PC-9 (cell line): ENCODE measurements at regions of chr12 and their contacts with region 1.

Region 1: DNA sequence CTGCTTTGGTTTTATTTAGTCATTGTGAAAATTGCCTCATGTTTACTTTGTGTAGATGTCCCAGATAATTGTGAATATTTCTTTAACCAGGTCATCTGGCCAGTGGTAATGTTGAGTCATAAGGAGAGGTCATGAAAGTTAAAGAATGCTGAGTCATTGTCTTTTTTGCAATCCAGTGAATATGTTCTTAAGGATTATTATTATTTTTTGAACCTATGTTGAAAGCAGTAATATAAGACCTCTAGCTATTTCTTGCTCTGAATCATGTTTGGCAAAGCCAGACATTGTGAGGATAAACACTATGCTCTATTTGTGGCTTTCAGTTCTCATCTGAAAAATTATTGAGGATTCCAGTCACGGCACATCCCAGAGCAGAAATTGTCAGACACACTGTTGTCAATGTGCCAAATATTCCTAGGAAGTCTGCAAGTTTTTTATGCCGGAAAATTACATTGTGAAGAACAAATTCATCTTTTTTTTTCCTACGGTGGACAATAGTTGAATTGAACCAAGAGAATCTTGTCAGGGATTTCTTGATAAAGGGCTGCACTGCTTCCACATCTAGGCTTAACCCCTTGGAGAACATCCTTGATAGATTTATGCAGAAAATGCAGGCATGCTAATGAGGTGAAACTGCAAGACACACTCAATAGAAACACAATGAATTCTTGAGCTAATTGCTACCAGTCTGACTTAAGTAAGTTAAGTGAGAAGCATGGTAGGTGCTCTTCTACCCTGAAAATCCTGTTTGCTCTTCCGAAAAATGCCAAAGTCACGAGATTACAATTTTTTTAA is 369.7 kb downstream of the ATP23 start:
- DNase-seq: peak; percentile 17 to 94
- H3K4me3 ChIP-seq: peak overlapping the region; percentile 6; the same call in 1 of the 2 replicates
- H3K27ac ChIP-seq: peak overlapping the region; percentile 85
- H3K4me1 ChIP-seq: peaks cover 33% of the 10 kb centered on the region
- H3K27me3 ChIP-seq: no peaks in the 10 kb centered on the region
- CTCF ChIP-seq: no peak

Region 2: GRCh38 chr12:57993025-57993424 is 318.0 kb before region 1 on chr12:
- CTCF ChIA-PET with region 1: no interaction called
- POLR2A ChIA-PET with region 1: no interaction called
- intact Hi-C with region 1: loop called (anchors 5 kb)
- DNase-seq: no peak
- H3K4me3 ChIP-seq: no peak overlapping the region
- H3K27ac ChIP-seq: no peak overlapping the region
- H3K4me1 ChIP-seq: no peaks in the 10 kb centered on the region
- H3K27me3 ChIP-seq: no peaks in the 10 kb centered on the region
- CTCF ChIP-seq: peak; percentile 59

Region 3: DNA sequence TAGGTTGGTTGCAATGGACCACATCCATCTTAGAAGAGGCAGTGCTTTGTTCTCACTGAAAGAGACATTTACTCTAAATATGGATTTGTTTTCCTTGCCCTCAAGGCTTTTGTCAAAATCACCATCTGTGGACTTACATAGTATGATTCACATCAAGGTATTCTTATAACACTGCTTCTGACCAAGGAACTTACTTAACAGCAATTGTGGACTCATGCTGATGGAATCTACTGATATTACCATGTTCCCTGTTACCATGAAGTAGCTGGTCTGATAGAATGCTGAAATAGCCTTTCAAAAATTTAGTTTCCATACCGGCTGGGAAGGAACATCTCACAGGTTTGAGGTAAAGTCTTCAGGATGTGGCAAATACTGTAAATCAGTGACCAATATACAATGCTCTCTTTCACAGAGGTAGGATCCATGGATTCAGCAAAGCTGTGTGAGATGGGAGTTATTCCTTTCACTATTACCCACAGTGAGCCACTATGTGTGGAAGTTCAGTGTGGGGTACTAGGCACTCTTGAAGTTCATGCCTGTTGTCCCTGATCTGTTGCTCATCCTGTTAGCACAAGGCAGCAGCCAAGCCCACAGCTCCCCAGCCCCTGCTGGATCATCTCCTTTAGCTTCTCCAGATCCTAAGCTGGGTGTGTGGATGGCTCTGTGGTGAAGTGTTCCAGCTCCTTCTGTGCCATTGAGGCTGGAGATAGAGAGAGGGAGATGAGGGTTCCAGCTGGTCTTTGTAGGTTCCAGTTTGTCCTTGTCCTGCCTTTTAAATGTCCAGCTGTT is 243.2 kb before region 1 on chr12:
- CTCF ChIA-PET with region 1: no interaction called
- POLR2A ChIA-PET with region 1: no interaction called
- intact Hi-C with region 1: loop called (anchors 5 kb)
- DNase-seq: peak; percentile 22 to 99
- H3K4me3 ChIP-seq: no peak overlapping the region
- H3K27ac ChIP-seq: peak overlapping the region; percentile 57
- H3K4me1 ChIP-seq: peaks cover 39% of the 10 kb centered on the region
- H3K27me3 ChIP-seq: no peaks in the 10 kb centered on the region
- CTCF ChIP-seq: no peak

Region 4: GRCh38 chr12:58288190-58288589 is 22.8 kb before region 1 on chr12:
- CTCF ChIA-PET with region 1: no interaction called
- POLR2A ChIA-PET with region 1: no interaction called
- intact Hi-C with region 1: no loop called
- DNase-seq: no peak
- H3K4me3 ChIP-seq: no peak overlapping the region
- H3K27ac ChIP-seq: no peak overlapping the region
- H3K4me1 ChIP-seq: no peaks in the 10 kb centered on the region
- H3K27me3 ChIP-seq: no peaks in the 10 kb centered on the region
- CTCF ChIP-seq: no peak

Region 5: DNA sequence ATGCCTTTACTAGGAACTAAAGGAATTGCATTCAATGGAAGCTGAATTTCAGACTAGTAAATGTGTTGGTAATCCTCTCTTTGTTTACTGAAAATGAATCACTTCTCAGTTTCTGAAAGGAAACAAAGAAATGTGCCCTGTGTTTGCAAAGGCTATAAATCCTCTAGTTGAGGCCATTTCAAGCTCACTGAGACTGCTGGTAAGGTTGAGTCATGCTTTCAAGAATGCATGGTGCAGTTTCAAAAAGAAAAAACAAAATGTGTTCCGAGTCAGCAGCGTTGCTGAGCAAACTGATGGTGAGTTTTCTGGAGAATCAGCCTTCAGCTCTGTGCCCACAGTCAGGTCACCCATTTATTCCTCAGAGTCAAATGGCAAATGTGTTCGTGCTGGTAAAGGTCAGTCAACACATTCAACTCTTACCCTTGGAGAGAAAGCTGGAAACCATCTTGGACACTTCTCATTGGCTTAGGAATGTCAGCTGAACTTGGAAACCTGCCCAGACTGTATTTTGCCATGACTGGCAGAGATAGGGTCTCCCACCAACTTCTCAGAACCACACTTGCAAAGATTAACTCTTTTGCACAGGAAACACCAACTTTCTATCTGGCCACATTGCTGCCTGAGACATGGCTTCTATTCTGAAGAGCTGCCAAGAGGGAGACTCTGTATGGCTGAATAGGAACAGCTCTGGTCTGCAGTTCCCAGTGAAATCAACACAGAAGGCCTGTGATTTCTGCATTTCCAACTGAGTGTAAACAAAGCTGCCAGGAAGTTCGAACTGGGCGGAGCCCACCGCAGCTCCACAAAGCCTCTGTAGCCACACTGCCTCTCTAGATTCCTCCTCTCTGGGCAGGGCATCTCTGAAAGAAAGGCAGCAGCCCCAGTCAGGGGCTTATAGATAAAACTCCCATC is 114.7 kb after region 1 on chr12:
- CTCF ChIA-PET with region 1: no interaction called
- POLR2A ChIA-PET with region 1: no interaction called
- intact Hi-C with region 1: loop called (anchors 5 kb)
- DNase-seq: peak; percentile 53 to 95
- H3K4me3 ChIP-seq: peak overlapping the region; percentile 37; the same call in 1 of the 2 replicates
- H3K27ac ChIP-seq: peak overlapping the region; percentile 92
- H3K4me1 ChIP-seq: peaks cover 37% of the 10 kb centered on the region
- H3K27me3 ChIP-seq: no peaks in the 10 kb centered on the region
- CTCF ChIP-seq: no peak

Region 6: GRCh38 chr12:58452546-58452945 is 141.5 kb after region 1 on chr12:
- CTCF ChIA-PET with region 1: no interaction called
- POLR2A ChIA-PET with region 1: no interaction called
- intact Hi-C with region 1: no loop called
- DNase-seq: no peak
- H3K4me3 ChIP-seq: no peak overlapping the region
- H3K27ac ChIP-seq: no peak overlapping the region
- H3K4me1 ChIP-seq: no peaks in the 10 kb centered on the region
- H3K27me3 ChIP-seq: no peaks in the 10 kb centered on the region
- CTCF ChIP-seq: no peak